ENCODE measurements at regions of chr2 and their contacts with region 1.

Region 1: DNA sequence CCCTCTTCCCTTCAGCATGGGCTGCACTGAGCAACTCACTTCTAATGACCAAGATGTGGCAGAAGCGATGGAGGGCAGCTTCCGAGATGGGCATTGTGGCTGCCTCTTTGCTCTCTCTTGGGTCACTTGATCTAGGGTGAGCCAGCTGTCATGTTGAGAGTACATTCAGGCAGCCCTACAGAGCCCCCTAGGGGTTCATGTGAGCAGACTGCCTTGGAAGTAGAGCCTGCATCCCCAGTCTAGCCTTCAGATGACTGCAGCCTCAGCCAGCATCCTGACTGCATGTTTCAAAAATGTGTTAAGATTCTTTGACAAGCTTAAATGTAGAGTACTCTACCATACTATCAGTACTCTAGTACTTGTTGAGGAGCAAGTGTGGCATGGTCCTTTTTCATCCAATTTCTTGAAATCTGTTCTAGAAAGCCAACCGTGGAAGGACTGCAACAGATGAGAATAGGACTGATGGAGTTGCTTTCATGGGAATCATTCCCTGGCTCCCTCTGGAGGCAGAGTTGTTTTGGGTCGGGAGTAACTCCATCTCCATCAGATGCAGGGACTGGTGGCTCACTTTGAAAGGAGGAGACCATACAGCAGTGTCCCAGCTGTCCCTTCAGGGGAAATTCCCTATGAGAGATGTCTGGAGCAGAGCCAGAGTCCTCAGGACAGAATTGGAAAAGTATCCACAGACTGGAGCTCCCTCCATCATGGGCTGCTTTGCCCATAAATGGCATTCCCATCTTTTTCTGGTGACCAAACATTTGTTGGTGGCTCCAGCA is 144.1 kb downstream of the NCK2 start:
- DNase-seq: no peak
- H3K4me3 ChIP-seq: no peak overlapping the region
- H3K27ac ChIP-seq: peak overlapping the region; percentile 65 to 69
- H3K4me1 ChIP-seq: peaks cover 0 to 43% of the 10 kb centered on the region in 2 donors
- H3K27me3 ChIP-seq: no peaks in the 10 kb centered on the region
- CTCF ChIP-seq: no peak

Region 2: DNA sequence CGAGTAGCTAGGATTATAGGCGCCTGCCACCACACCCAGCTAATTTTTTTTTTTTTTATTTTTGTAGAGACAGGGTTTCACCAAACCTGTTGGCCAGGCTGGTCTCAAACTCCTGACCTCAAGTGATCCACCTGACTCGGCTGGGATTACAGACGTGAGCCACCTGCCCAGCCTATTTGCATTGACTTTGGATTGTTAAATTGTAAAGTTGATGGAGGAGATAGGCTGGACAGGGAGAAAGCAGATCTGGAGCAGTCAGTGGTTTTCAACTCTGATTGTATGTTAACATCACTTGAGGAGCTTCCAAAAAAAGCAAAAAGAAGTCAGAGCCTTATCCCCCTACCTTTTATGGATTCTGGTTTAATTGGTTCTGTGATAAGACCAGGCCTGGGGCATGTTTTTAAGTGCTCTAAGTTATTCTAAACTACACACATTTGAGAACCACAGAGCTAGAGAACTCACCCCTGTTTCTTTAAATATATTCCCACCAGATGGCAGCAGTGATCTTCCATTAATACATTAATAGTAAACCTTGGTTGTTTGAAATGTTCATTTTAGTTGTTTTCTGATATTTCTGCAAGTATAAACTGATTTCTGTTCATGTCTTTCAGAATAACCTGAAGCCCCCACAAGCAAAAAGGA is 544.0 kb before region 1 on chr2:
- intact Hi-C with region 1: no loop called
- DNase-seq: no peak
- H3K4me3 ChIP-seq: no peak overlapping the region
- H3K27ac ChIP-seq: no peak overlapping the region
- H3K4me1 ChIP-seq: no peaks in the 10 kb centered on the region
- H3K27me3 ChIP-seq: no peaks in the 10 kb centered on the region
- CTCF ChIP-seq: peak in 1 of 3 experiments; percentile 21

Region 3: GRCh38 chr2:105789745-105790460 is 98.9 kb before region 1 on chr2:
- intact Hi-C with region 1: loop called (anchors 5 kb)
- DNase-seq: peak; percentile 47 to 89
- H3K4me3 ChIP-seq: peak overlapping the region in 1 of 2 donors; percentile 35
- H3K27ac ChIP-seq: peak overlapping the region; percentile 68 to 81
- H3K4me1 ChIP-seq: peaks cover 19 to 34% of the 10 kb centered on the region in 2 donors
- H3K27me3 ChIP-seq: no peaks in the 10 kb centered on the region
- CTCF ChIP-seq: peak in 1 of 3 experiments; percentile 9

Region 4: GRCh38 chr2:106261871-106262321 is 373.1 kb after region 1 on chr2:
- intact Hi-C with region 1: no loop called
- DNase-seq: no peak
- H3K4me3 ChIP-seq: no peak overlapping the region
- H3K27ac ChIP-seq: no peak overlapping the region
- H3K4me1 ChIP-seq: no peaks in the 10 kb centered on the region
- H3K27me3 ChIP-seq: no peaks in the 10 kb centered on the region
- CTCF ChIP-seq: no peak

Measured in ascending aorta (tissue), 2 donors.